ENCODE measurements at regions of chr14 and their contacts with region 1.

Region 1: GRCh38 chr14:22099942-22100763 is 426.5 kb upstream of the OR4E1 start:
- DNase-seq: peak; percentile 70 to 72
- H3K4me3 ChIP-seq: no peak overlapping the region
- H3K27ac ChIP-seq: no peak overlapping the region
- H3K4me1 ChIP-seq: peaks cover 0 to 4% (median 0%) of the 10 kb centered on the region in 4 experiments; a peak in 1 of 7 replicates
- H3K27me3 ChIP-seq: 0 out of 7 replicates have a peak, but pooled peaks cover 0 to 2% (median 0%) of the 10 kb centered on the region in 4 experiments
- CTCF ChIP-seq: peak; percentile 84 to 99 (median 90)
- EP300 ChIP-seq: no peak
- POLR2A ChIP-seq: no peak
- RAD21 ChIP-seq: peak; percentile 60 to 67

Region 2: DNA sequence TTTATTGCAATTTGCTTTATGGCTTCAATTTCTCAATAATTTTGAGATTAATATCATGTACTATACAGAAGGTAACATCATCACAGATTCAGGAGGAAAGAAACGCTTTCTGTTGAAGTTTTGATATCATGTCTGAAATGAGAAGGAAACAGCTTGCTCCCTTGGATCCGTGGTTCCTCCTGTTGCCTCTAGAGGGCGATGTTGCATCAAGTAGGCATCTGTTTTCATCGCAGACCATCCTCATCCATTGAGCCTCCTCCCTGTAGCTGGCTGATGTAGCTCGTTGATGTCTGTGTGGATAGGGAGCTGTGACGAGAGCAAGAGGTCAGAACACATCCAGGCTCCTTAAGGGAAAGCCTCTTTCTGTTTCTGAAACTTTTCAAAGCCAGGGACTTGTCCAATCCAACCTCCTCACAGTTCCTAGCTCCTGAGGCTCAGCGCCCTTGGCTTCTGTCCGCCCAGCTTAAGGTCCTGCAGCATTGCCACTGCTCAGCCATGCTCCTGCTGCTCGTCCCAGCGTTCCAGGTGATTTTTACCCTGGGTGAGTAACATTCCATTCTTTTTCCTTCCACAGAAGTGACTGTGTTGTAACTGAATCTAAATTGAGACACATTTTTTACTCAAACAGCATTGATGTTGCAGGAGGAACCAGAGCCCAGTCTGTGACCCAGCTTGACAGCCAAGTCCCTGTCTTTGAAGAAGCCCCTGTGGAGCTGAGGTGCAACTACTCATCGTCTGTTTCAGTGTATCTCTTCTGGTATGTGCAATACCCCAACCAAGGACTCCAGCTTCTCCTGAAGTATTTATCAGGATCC is 121.8 kb before region 1 on chr14:
- CTCF ChIA-PET with region 1: interaction called, 14 read pairs
- POLR2A ChIA-PET with region 1: no interaction called
- DNase-seq: peak in 1 of 2 experiments; percentile 84
- H3K4me3 ChIP-seq: no peak overlapping the region
- H3K27ac ChIP-seq: no peak overlapping the region
- H3K4me1 ChIP-seq: no peaks in the 10 kb centered on the region
- H3K27me3 ChIP-seq: peaks cover 0 to 1% (median 0%) of the 10 kb centered on the region in 4 experiments; a peak in 1 of 7 replicates
- CTCF ChIP-seq: peak; percentile 81 to 93 (median 89)
- EP300 ChIP-seq: no peak
- POLR2A ChIP-seq: no peak
- RAD21 ChIP-seq: peak; percentile 61 to 65

Region 3: GRCh38 chr14:21997300-21997699 is 102.9 kb before region 1 on chr14:
- CTCF ChIA-PET with region 1: interaction called, 25 read pairs
- POLR2A ChIA-PET with region 1: no interaction called
- DNase-seq: no peak
- H3K4me3 ChIP-seq: no peak overlapping the region
- H3K27ac ChIP-seq: no peak overlapping the region
- H3K4me1 ChIP-seq: no peaks in the 10 kb centered on the region
- H3K27me3 ChIP-seq: no peaks in the 10 kb centered on the region
- CTCF ChIP-seq: peak; percentile 53 to 71 (median 60)
- EP300 ChIP-seq: no peak
- POLR2A ChIP-seq: no peak
- RAD21 ChIP-seq: peak; percentile 52 to 63

Region 4: GRCh38 chr14:22084393-22085281 is 15.5 kb before region 1 on chr14:
- CTCF ChIA-PET with region 1: interaction called, 39 read pairs
- POLR2A ChIA-PET with region 1: no interaction called
- DNase-seq: no peak
- H3K4me3 ChIP-seq: no peak overlapping the region
- H3K27ac ChIP-seq: no peak overlapping the region
- H3K4me1 ChIP-seq: peaks cover 0 to 3% (median 0%) of the 10 kb centered on the region in 4 experiments; a peak in 2 of 7 replicates
- H3K27me3 ChIP-seq: no peaks in the 10 kb centered on the region
- CTCF ChIP-seq: peak in 2 of 3 experiments; percentile 45 to 62; a peak in 2 of 4 replicates
- EP300 ChIP-seq: no peak
- POLR2A ChIP-seq: no peak
- RAD21 ChIP-seq: peak; percentile 44 to 45

Region 5: DNA sequence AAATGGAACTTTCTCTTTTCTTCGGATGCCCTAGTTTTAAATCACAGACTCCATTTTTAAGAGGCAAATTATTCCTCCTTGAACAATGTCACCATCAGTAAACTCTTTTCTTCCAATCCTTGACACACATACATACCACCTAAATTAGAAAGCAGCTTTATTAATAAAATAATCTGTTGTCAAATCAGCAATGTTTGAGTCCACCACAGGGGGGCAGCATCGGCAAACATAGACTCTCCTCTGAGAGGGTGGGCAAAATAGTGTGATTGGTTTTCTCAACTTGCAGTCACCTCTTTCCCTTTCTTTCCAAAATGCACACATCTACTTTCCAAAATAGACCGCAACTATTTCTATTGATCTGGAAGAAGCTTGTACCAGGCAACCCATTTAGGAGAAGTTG is 11.9 kb after region 1 on chr14:
- CTCF ChIA-PET with region 1: interaction called, 12 read pairs
- POLR2A ChIA-PET with region 1: interaction called, 4 read pairs
- DNase-seq: peak in 1 of 2 experiments; percentile 76
- H3K4me3 ChIP-seq: no peak overlapping the region
- H3K27ac ChIP-seq: no peak overlapping the region
- H3K4me1 ChIP-seq: no peaks in the 10 kb centered on the region
- H3K27me3 ChIP-seq: no peaks in the 10 kb centered on the region
- CTCF ChIP-seq: peak; percentile 40 to 65 (median 58)
- EP300 ChIP-seq: no peak
- POLR2A ChIP-seq: no peak
- RAD21 ChIP-seq: peak; percentile 46 to 62; a peak in 3 of 4 replicates

Region 6: GRCh38 chr14:22155571-22155970 is 55.4 kb after region 1 on chr14:
- CTCF ChIA-PET with region 1: no interaction called
- POLR2A ChIA-PET with region 1: no interaction called
- DNase-seq: no peak
- H3K4me3 ChIP-seq: no peak overlapping the region
- H3K27ac ChIP-seq: no peak overlapping the region
- H3K4me1 ChIP-seq: no peaks in the 10 kb centered on the region
- H3K27me3 ChIP-seq: no peaks in the 10 kb centered on the region
- CTCF ChIP-seq: no peak
- EP300 ChIP-seq: no peak
- POLR2A ChIP-seq: no peak
- RAD21 ChIP-seq: no peak

Measured in H1 (cell line).